B cell (primary cell): ENCODE measurements at regions of chrX and their contacts with region 1.

Region 1: GRCh38 chrX:53678667-53679066 is 7.9 kb downstream of the HUWE1 start:
- DNase-seq: peak; percentile 26
- ATAC-seq: no peak
- H3K4me3 ChIP-seq: no peak overlapping the region
- H3K4me3 Mint-ChIP-seq: no peak overlapping the region
- H3K27ac ChIP-seq: no peak overlapping the region
- H3K27ac Mint-ChIP-seq: no peak overlapping the region
- H3K4me1 ChIP-seq: peaks cover 9 to 12% of the 10 kb centered on the region in 2 donors
- H3K4me1 Mint-ChIP-seq: peaks cover 21% of the 10 kb centered on the region
- H3K27me3 ChIP-seq: no peaks in the 10 kb centered on the region
- H3K27me3 Mint-ChIP-seq: no peaks in the 10 kb centered on the region
- CTCF ChIP-seq: peak; percentile 14

Region 2: GRCh38 chrX:53642337-53642736 is 36.3 kb before region 1 on chrX:
- CTCF ChIA-PET with region 1: no interaction called
- POLR2A ChIA-PET with region 1: no interaction called
- intact Hi-C with region 1: loop called (anchors 5 kb)
- DNase-seq: no peak
- ATAC-seq: no peak
- H3K4me3 ChIP-seq: no peak overlapping the region
- H3K4me3 Mint-ChIP-seq: no peak overlapping the region
- H3K27ac ChIP-seq: no peak overlapping the region
- H3K27ac Mint-ChIP-seq: no peak overlapping the region
- H3K4me1 ChIP-seq: no peaks in the 10 kb centered on the region
- H3K4me1 Mint-ChIP-seq: no peaks in the 10 kb centered on the region
- H3K27me3 ChIP-seq: no peaks in the 10 kb centered on the region
- H3K27me3 Mint-ChIP-seq: no peaks in the 10 kb centered on the region
- CTCF ChIP-seq: no peak

Region 3: GRCh38 chrX:53831662-53832635 is 153.3 kb after region 1 on chrX:
- CTCF ChIA-PET with region 1: interaction called, 4 read pairs
- POLR2A ChIA-PET with region 1: no interaction called
- intact Hi-C with region 1: loop called (anchors 2 kb)
- DNase-seq: peak; percentile 52
- ATAC-seq: peak; percentile 65
- H3K4me3 ChIP-seq: no peak overlapping the region
- H3K4me3 Mint-ChIP-seq: no peak overlapping the region
- H3K27ac ChIP-seq: no peak overlapping the region
- H3K27ac Mint-ChIP-seq: no peak overlapping the region
- H3K4me1 ChIP-seq: no peaks in the 10 kb centered on the region
- H3K4me1 Mint-ChIP-seq: peaks cover 4% of the 10 kb centered on the region
- H3K27me3 ChIP-seq: no peaks in the 10 kb centered on the region
- H3K27me3 Mint-ChIP-seq: no peaks in the 10 kb centered on the region
- CTCF ChIP-seq: peak; percentile 52